BJ (cell line): ENCODE measurements at regions of chr10 and their contacts with region 1.

Region 1: GRCh38 chr10:93376372-93377293 is 105.5 kb downstream of the MYOF start:
- DNase-seq: peak; percentile 84
- H3K4me3 ChIP-seq: no peak overlapping the region
- H3K27me3 ChIP-seq: no peaks in the 10 kb centered on the region
- CTCF ChIP-seq: peak; percentile 84

Region 2: DNA sequence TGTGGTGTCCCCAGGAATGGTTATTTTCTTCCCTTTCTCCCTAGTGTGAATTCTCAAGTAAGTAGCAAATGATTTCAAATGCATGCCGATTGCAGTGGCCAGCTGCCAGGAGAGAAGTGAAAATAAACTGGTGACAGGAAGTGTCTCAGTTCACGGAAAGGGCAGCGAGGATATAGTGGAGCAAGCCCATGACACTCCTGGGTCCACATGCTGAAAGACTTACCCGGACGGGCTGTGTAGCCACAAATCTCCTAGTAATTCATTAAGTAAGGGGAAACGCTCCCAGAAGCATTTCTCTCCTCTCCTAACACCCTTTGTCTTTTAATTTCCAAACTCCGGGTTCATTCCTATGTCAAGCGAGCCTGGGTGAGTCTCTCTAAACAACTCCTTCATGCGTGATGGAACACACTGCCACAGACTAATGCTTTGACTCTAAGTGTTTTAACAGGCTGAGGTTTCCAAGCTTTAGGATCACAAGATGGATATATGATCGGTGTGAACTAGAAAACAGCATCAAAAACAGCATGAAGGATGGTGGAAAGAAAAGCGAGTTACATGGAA is 177.4 kb before region 1 on chr10:
- CTCF ChIA-PET with region 1: no interaction called
- POLR2A ChIA-PET with region 1: no interaction called
- DNase-seq: peak; percentile 51
- H3K4me3 ChIP-seq: peak overlapping the region; percentile 30
- H3K27me3 ChIP-seq: 0 out of 2 replicates have a peak, but pooled peaks cover 1% of the 10 kb centered on the region
- CTCF ChIP-seq: no peak

Region 3: DNA sequence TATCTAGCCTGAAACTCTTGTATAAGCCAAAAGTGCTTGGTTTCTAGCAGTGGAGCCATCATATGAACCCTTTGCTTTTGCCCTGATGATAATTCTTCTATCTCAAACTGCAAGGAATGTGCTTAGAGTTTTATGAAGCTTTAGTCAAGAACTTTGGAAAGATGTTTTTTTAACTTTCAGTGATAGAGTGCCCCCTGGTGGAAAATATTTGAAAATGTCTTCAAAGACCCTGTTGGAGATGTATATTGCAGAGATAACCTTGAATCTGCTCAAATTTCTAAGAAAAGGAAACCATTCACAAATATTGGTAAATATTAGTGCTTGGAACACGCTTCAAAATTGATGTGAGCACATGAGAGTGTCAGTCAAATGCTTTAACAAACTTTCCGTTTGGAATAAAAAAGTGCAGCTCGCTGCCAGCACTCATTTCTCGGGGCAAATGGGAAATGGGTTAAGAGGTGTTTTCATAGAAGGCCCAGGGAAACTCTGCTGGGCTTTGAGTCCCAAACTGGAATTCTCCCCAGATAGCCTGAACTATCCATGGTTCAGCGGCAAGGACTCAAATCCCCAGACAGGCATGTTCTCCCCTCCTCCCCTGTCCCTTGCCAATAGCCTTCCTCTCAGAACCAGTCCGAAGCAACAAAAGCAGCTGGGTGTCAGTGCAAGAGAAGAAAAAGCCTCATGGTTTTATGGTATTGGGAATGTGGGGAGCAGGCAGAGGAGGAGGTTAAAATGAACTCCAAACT is 23.8 kb before region 1 on chr10:
- CTCF ChIA-PET with region 1: interaction called, 26 read pairs
- POLR2A ChIA-PET with region 1: no interaction called
- DNase-seq: no peak
- H3K4me3 ChIP-seq: no peak overlapping the region
- H3K27me3 ChIP-seq: no peaks in the 10 kb centered on the region
- CTCF ChIP-seq: peak; percentile 55

Region 4: DNA sequence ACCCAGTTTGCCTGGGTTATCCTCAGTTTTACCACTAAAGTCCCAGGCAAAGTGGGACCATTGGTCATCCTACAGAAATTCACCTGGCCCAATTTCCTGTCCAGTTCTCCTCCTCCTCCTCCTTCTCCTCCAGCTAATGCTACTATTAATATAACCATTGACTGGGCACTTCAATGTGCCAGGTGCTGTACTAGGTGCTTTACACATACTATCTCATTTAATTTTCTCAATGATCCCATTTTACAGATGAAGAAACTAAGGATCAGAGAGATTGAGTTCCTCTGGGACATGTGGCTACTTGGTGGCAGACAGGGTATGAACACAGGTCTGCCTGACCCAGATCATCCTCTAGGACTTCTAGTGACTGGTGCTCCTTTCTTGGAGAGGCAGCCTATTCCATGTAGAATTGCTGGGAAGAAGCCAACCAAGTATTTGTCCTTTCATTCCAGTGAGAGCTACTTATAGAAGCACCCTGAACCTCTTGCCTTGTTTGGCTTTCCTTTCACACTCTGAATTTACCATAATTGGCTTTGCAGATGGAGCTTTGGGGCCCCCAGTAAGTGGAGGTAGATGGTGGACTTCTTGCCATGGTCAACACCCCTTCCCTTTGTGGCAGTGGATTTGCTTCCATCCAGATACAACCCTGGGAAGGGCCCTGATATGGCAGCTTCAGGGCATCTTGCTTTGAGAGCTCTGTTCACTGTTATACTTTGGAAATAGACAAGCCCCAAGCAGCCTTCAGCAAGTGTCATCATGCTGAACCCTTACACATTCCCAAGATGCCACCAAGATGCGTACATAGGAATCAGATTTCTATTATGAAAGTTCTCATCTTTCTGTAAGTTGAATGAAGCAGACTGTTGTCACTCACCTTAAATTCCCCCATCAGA is 26.8 kb after region 1 on chr10:
- CTCF ChIA-PET with region 1: interaction called, 17 read pairs
- POLR2A ChIA-PET with region 1: no interaction called
- DNase-seq: no peak
- H3K4me3 ChIP-seq: no peak overlapping the region
- H3K27me3 ChIP-seq: no peaks in the 10 kb centered on the region
- CTCF ChIP-seq: no peak

Region 5: GRCh38 chr10:93463678-93464476 is 87.2 kb after region 1 on chr10:
- CTCF ChIA-PET with region 1: interaction called, 12 read pairs
- POLR2A ChIA-PET with region 1: interaction called, 3 read pairs
- DNase-seq: no peak
- H3K4me3 ChIP-seq: no peak overlapping the region
- H3K27me3 ChIP-seq: no peaks in the 10 kb centered on the region
- CTCF ChIP-seq: no peak

Region 6: GRCh38 chr10:93482145-93482834 is 105.7 kb after region 1 on chr10 and contains the start of gene MYOF:
- CTCF ChIA-PET with region 1: interaction called, 276 read pairs
- POLR2A ChIA-PET with region 1: interaction called, 15 read pairs
- DNase-seq: peak; percentile 91
- H3K4me3 ChIP-seq: peak within 1 kb of the TSS; percentile 72
- H3K27me3 ChIP-seq: no peaks in the 10 kb centered on the region
- CTCF ChIP-seq: peak; percentile 54
- polyA plus RNA-seq, gene MYOF: 355 and 425 TPM in 2 replicates

Region 7: DNA sequence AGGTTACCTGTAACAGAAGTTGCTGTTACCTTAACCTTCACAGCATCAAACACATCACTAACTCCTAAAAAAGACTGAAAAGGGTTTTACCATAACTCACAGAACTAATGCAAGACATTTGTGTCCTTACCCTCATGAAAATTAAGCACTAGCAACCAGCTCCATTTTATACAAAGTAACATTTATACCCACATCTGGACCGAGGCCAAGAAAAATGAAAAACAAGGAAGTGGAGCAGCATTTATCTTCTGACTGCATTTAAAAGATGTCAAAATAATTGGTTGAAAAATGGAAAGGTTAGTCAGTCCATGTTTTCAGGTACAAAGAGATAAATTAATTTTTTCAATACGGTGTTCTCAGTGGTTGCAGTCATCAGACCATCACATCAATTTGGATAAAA is 227.5 kb after region 1 on chr10:
- CTCF ChIA-PET with region 1: no interaction called
- POLR2A ChIA-PET with region 1: no interaction called
- DNase-seq: no peak
- H3K4me3 ChIP-seq: no peak overlapping the region
- H3K27me3 ChIP-seq: peaks cover 13% of the 10 kb centered on the region
- CTCF ChIP-seq: no peak